ENCODE measurements at regions of chr1 and their contacts with region 1.

Region 1: GRCh38 chr1:171251042-171251951 is 3.0 kb downstream of the FMO1 start:
- DNase-seq: peak; percentile 45
- H3K4me3 ChIP-seq: peak overlapping the region; percentile 58 to 68 (median 64)
- H3K27ac ChIP-seq: peak overlapping the region; percentile 16
- H3K4me1 ChIP-seq: peaks cover 18% of the 10 kb centered on the region
- H3K27me3 ChIP-seq: no peaks in the 10 kb centered on the region
- CTCF ChIP-seq: peak; percentile 47 to 61

Region 2: GRCh38 chr1:171300401-171300800 is 49.1 kb after region 1 on chr1:
- CTCF ChIA-PET with region 1: no interaction called
- dilution Hi-C with region 1: no loop called
- in situ Hi-C with region 1: loop called in 1 of 2 experiments (anchors 10 kb)
- intact Hi-C with region 1: no loop called
- DNase-seq: no peak
- H3K4me3 ChIP-seq: no peak overlapping the region
- H3K27ac ChIP-seq: no peak overlapping the region
- H3K4me1 ChIP-seq: no peaks in the 10 kb centered on the region
- H3K27me3 ChIP-seq: no peaks in the 10 kb centered on the region
- CTCF ChIP-seq: no peak

Region 3: DNA sequence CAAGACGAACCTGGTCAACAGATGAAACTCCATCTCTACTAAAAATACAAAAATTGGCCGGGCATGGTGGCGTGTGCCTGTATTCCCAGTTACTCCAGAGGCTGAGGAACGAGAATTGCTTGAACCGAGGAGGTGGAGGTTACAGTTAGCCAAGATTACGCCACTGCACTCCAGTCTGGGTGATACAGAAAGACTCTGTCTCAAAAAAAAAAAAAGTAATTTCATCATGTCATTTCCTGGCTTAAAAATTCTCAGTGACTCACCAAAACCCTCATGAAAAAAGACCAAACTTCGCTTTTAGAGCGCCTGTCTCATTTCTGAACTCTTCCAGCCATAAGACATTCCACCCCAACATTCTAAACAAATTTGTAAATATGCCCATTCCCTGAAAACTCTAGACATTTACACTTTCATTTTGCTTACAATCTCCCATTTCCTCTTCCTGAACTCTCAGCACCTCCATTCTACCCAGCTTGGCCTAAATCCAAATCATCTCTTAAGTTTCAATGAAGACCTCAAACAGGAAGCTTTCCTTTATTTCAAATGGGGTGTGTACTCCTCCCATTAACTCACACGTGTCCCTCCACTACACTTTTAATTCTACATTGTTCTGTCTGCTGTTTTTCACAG is 183.5 kb after region 1 on chr1:
- CTCF ChIA-PET with region 1: no interaction called
- dilution Hi-C with region 1: no loop called
- in situ Hi-C with region 1: no loop called
- intact Hi-C with region 1: loop called (anchors 10 kb)
- DNase-seq: peak; percentile 69
- H3K4me3 ChIP-seq: peak overlapping the region in 1 of 3 experiments; percentile 11
- H3K27ac ChIP-seq: peak overlapping the region; percentile 89
- H3K4me1 ChIP-seq: peaks cover 33% of the 10 kb centered on the region
- H3K27me3 ChIP-seq: no peaks in the 10 kb centered on the region
- CTCF ChIP-seq: no peak